Activated naive CD4-positive, alpha-beta T cell treated with anti-CD3 and anti-CD28 coated beads for 36 hours (primary cell): ENCODE measurements at regions of chr14 and their contacts with region 1.

Region 1: GRCh38 chr14:51979088-51979709 is 10.1 kb upstream of the RTRAF start:
- DNase-seq: peak; percentile 91
- H3K4me3 Mint-ChIP-seq: no peak overlapping the region
- H3K27ac Mint-ChIP-seq: no peak overlapping the region
- H3K4me1 Mint-ChIP-seq: peaks cover 4% of the 10 kb centered on the region
- H3K27me3 Mint-ChIP-seq: no peaks in the 10 kb centered on the region

Region 2: DNA sequence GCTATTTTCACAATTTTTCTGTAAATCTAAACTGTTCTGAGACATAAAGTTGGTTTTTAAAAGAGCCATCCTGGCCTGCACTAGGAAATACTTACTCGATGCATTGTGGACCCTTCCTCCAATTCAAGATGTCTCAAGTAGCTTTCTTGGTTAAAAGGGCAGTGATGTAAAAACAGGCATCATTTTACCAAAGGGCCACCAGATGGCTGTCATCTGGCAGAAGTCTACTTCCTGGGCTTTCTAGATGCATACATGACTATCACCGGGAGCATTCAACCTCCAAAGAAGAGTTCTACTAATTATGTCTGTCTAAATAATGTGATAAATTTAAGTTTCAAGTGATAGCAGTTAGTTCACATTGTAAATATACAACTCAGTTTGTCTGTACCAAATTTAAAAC is 424.2 kb before region 1 on chr14:
- CTCF ChIA-PET with region 1: no interaction called
- intact Hi-C with region 1: loop called (anchors 10 kb)
- DNase-seq: no peak
- H3K4me3 Mint-ChIP-seq: no peak overlapping the region
- H3K27ac Mint-ChIP-seq: no peak overlapping the region
- H3K4me1 Mint-ChIP-seq: no peaks in the 10 kb centered on the region
- H3K27me3 Mint-ChIP-seq: peaks cover 2% of the 10 kb centered on the region

Region 3: GRCh38 chr14:51828017-51828797 is 151.0 kb before region 1 on chr14:
- CTCF ChIA-PET with region 1: interaction called, 26 read pairs
- intact Hi-C with region 1: loop called (anchors 1 kb)
- DNase-seq: peak; percentile 89
- H3K4me3 Mint-ChIP-seq: no peak overlapping the region
- H3K27ac Mint-ChIP-seq: peak overlapping the region; percentile 48
- H3K4me1 Mint-ChIP-seq: no peaks in the 10 kb centered on the region
- H3K27me3 Mint-ChIP-seq: no peaks in the 10 kb centered on the region

Region 4: GRCh38 chr14:51996148-51996746 is 17.0 kb after region 1 on chr14:
- CTCF ChIA-PET with region 1: interaction called, 10 read pairs
- intact Hi-C with region 1: no loop called
- DNase-seq: no peak
- H3K4me3 Mint-ChIP-seq: no peak overlapping the region
- H3K27ac Mint-ChIP-seq: no peak overlapping the region
- H3K4me1 Mint-ChIP-seq: peaks cover 33% of the 10 kb centered on the region
- H3K27me3 Mint-ChIP-seq: no peaks in the 10 kb centered on the region

Region 5: DNA sequence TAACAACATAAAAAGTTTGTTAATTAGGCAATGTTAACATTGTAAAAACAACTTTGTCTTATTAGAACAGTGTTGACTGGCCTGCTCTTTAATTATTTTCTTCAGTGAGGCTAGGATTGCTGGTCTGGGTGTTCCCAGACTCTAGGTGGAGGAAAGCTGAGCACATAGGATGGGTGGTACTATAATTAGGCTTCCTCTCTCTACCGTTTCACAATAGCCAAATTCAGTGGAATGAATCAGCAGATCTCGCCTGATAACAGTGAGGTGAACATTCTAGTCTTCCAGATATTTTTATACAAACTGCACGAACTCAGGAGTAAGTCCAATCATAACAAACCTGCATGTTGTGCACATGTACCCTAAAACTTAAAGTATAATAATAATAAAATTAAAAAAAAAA is 300.2 kb after region 1 on chr14:
- CTCF ChIA-PET with region 1: no interaction called
- intact Hi-C with region 1: no loop called
- DNase-seq: no peak
- H3K4me3 Mint-ChIP-seq: no peak overlapping the region
- H3K27ac Mint-ChIP-seq: no peak overlapping the region
- H3K4me1 Mint-ChIP-seq: peaks cover 6% of the 10 kb centered on the region
- H3K27me3 Mint-ChIP-seq: no peaks in the 10 kb centered on the region